Naive thymus-derived CD4-positive, alpha-beta T cell (primary cell): ENCODE measurements at regions of chr20 and their contacts with region 1.

Region 1: GRCh38 chr20:36754656-36755222 is 8.8 kb upstream of the NDRG3 start:
- DNase-seq: peak in 7 of 9 donors; percentile 12 to 56 (median 45)
- ATAC-seq: peak; percentile 88
- H3K4me3 ChIP-seq: no peak overlapping the region
- H3K4me3 Mint-ChIP-seq: no peak overlapping the region
- H3K27ac ChIP-seq: no peak overlapping the region
- H3K27ac Mint-ChIP-seq: peak overlapping the region in 1 of 9 donors; percentile 51
- H3K4me1 ChIP-seq: no peaks in the 10 kb centered on the region
- H3K4me1 Mint-ChIP-seq: peaks cover 0 to 11% (median 0%) of the 10 kb centered on the region in 7 donors
- H3K27me3 ChIP-seq: no peaks in the 10 kb centered on the region
- H3K27me3 Mint-ChIP-seq: no peaks in the 10 kb centered on the region

Region 2: DNA sequence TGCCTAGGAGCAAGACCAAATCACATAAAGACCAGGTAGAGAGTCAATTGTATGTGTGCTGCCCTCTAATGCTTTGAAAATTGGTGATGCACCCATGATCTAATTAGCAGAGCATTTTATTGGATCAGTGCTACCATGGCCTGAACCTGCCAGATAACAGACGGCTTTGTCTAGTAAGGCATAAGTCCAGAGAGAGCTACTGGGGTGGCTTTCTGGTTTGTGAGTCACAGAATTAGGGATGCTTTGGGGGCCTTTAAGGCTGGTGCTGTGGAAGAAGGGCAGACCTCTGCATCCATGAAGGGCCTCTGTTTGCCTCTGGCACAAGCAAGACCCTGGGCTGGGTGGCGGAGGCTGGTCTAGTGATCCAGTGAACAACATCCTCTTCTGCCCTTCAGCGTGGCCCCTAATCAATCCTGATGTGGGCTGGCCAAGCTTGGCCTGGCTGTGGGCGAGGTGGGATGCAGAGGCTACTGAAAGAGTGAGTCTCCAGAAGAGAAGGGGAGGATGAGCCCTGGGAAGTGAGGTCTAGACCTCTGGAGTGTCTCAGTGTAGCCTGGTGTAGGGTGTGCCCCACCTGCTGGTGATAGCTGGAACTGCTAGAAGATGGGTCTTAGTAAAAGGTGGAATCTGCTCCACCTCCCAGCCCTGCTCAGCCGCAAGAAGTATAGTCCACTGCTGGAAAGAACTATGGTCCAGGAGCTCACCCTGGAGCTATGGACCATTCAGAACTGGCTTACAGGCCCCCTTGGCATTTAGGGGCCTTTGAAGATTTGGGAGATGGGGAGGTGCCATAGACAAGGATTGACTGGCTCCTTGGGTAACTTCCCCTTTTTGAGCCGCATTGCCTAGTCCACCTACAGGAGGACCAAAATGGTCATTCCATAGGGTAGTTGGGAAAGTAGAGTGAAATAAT is 555.1 kb before region 1 on chr20:
- CTCF ChIA-PET with region 1: interaction called, 4 read pairs
- POLR2A ChIA-PET with region 1: no interaction called
- intact Hi-C with region 1: loop called in 1 of 2 experiments (anchors 1 kb)
- DNase-seq: peak; percentile 31 to 74 (median 57)
- ATAC-seq: peak; percentile 83
- H3K4me3 ChIP-seq: no peak overlapping the region
- H3K4me3 Mint-ChIP-seq: no peak overlapping the region
- H3K27ac ChIP-seq: no peak overlapping the region
- H3K27ac Mint-ChIP-seq: no peak overlapping the region
- H3K4me1 ChIP-seq: peaks cover 0 to 5% of the 10 kb centered on the region in 2 donors
- H3K4me1 Mint-ChIP-seq: peaks cover 3 to 6% (median 5%) of the 10 kb centered on the region in 7 donors
- H3K27me3 ChIP-seq: no peaks in the 10 kb centered on the region
- H3K27me3 Mint-ChIP-seq: peaks cover 9 to 21% (median 12%) of the 10 kb centered on the region in 5 donors

Region 3: GRCh38 chr20:36408219-36408618 is 346.5 kb before region 1 on chr20:
- CTCF ChIA-PET with region 1: no interaction called
- POLR2A ChIA-PET with region 1: no interaction called
- intact Hi-C with region 1: no loop called
- DNase-seq: no peak
- ATAC-seq: no peak
- H3K4me3 ChIP-seq: no peak overlapping the region
- H3K4me3 Mint-ChIP-seq: no peak overlapping the region
- H3K27ac ChIP-seq: no peak overlapping the region
- H3K27ac Mint-ChIP-seq: no peak overlapping the region
- H3K4me1 ChIP-seq: no peaks in the 10 kb centered on the region
- H3K4me1 Mint-ChIP-seq: peaks cover 0 to 9% (median 0%) of the 10 kb centered on the region in 7 donors
- H3K27me3 ChIP-seq: no peaks in the 10 kb centered on the region
- H3K27me3 Mint-ChIP-seq: peaks cover 4 to 17% (median 11%) of the 10 kb centered on the region in 5 donors

Region 4: DNA sequence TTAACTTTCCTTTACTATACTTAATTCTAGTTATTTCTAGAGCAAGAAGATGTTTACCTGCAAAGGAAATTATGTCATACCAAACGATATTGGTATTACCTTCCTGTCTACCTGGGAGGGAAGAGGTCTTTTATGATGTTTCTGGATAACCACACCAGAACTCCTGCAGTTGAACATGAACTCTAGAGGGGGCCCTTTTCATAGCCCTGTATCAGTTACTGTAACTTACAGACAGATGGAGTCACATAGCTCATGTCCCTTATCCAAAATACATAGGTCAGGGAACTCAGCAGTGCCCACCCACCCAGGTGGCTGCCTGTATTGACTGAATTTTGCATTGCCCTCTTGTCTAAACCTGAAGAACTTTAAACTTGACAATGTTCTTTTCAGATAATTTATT is 248.5 kb before region 1 on chr20:
- CTCF ChIA-PET with region 1: no interaction called
- POLR2A ChIA-PET with region 1: no interaction called
- intact Hi-C with region 1: loop called (anchors 1 kb)
- DNase-seq: peak in 7 of 9 donors; percentile 18 to 49 (median 42)
- ATAC-seq: peak; percentile 77
- H3K4me3 ChIP-seq: no peak overlapping the region
- H3K4me3 Mint-ChIP-seq: no peak overlapping the region
- H3K27ac ChIP-seq: no peak overlapping the region
- H3K27ac Mint-ChIP-seq: peak overlapping the region in 5 of 9 donors; percentile 17 to 72 (median 27)
- H3K4me1 ChIP-seq: no peaks in the 10 kb centered on the region
- H3K4me1 Mint-ChIP-seq: peaks cover 0 to 19% (median 14%) of the 10 kb centered on the region in 7 donors
- H3K27me3 ChIP-seq: no peaks in the 10 kb centered on the region
- H3K27me3 Mint-ChIP-seq: no peaks in the 10 kb centered on the region

Region 5: DNA sequence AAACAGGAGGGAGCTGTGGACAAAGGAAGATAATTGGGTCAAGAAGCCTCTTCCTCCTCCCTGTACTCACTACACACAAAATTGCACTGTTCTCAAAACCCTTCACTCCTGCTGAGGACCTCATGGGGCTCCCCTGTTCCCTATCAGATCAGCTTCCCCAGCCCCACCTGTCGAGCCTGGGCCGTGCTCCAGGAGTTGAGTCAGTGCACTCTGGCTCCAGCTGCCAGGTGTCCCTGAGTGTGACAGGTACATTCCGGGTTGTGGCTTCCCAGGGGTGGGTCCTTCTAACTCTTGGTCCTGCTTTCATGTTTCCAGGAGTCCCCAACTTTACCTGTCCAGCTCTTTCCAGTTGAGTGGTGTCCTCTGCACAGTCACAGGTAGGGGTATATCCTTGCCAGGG is 140.8 kb before region 1 on chr20:
- CTCF ChIA-PET with region 1: interaction called, 15 read pairs
- POLR2A ChIA-PET with region 1: no interaction called
- intact Hi-C with region 1: loop called (anchors 1 kb)
- DNase-seq: no peak
- ATAC-seq: no peak
- H3K4me3 ChIP-seq: no peak overlapping the region
- H3K4me3 Mint-ChIP-seq: no peak overlapping the region
- H3K27ac ChIP-seq: peak overlapping the region; percentile 21
- H3K27ac Mint-ChIP-seq: peak overlapping the region in 5 of 9 donors; percentile 14 to 85 (median 33)
- H3K4me1 ChIP-seq: no peaks in the 10 kb centered on the region
- H3K4me1 Mint-ChIP-seq: peaks cover 5 to 28% (median 18%) of the 10 kb centered on the region in 7 donors
- H3K27me3 ChIP-seq: no peaks in the 10 kb centered on the region
- H3K27me3 Mint-ChIP-seq: no peaks in the 10 kb centered on the region

Region 6: GRCh38 chr20:36672991-36673390 is 81.7 kb before region 1 on chr20:
- CTCF ChIA-PET with region 1: no interaction called
- POLR2A ChIA-PET with region 1: no interaction called
- intact Hi-C with region 1: no loop called
- DNase-seq: no peak
- ATAC-seq: no peak
- H3K4me3 ChIP-seq: no peak overlapping the region
- H3K4me3 Mint-ChIP-seq: no peak overlapping the region
- H3K27ac ChIP-seq: no peak overlapping the region
- H3K27ac Mint-ChIP-seq: no peak overlapping the region
- H3K4me1 ChIP-seq: no peaks in the 10 kb centered on the region
- H3K4me1 Mint-ChIP-seq: no peaks in the 10 kb centered on the region
- H3K27me3 ChIP-seq: no peaks in the 10 kb centered on the region
- H3K27me3 Mint-ChIP-seq: no peaks in the 10 kb centered on the region

Region 7: GRCh38 chr20:36717657-36718056 is 37.1 kb before region 1 on chr20:
- CTCF ChIA-PET with region 1: interaction called, 3 read pairs
- POLR2A ChIA-PET with region 1: no interaction called
- intact Hi-C with region 1: loop called in 1 of 2 experiments (anchors 1 kb)
- DNase-seq: peak in 4 of 9 donors; percentile 3 to 15 (median 8)
- ATAC-seq: no peak
- H3K4me3 ChIP-seq: no peak overlapping the region
- H3K4me3 Mint-ChIP-seq: no peak overlapping the region
- H3K27ac ChIP-seq: no peak overlapping the region
- H3K27ac Mint-ChIP-seq: peak overlapping the region in 2 of 9 donors; percentile 2 to 32
- H3K4me1 ChIP-seq: no peaks in the 10 kb centered on the region
- H3K4me1 Mint-ChIP-seq: peaks cover 0 to 12% (median 4%) of the 10 kb centered on the region in 7 donors
- H3K27me3 ChIP-seq: no peaks in the 10 kb centered on the region
- H3K27me3 Mint-ChIP-seq: no peaks in the 10 kb centered on the region

Region 8: DNA sequence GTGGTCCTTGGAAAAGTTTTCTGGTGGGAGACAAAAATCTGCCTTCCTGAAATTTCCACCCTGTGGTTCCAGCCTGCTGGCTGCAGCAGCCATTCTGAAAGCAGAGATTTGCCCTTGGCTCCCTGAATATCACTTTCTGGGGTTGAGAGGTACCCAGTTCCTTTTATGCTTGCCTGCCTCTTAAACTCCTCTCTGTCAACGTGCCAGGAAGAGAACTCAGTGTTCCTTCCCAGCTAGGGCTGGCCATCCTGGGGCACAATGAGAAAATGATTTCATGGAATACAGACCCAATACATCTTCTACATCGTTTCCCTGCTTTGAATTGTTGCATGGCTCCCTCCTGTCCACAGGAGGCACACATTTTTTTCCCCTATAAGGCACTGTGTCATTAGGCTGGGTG is 20.5 kb after region 1 on chr20:
- CTCF ChIA-PET with region 1: no interaction called
- POLR2A ChIA-PET with region 1: no interaction called
- intact Hi-C with region 1: no loop called
- DNase-seq: no peak
- ATAC-seq: no peak
- H3K4me3 ChIP-seq: no peak overlapping the region
- H3K4me3 Mint-ChIP-seq: peak overlapping the region; percentile 45 to 98 (median 92)
- H3K27ac ChIP-seq: no peak overlapping the region
- H3K27ac Mint-ChIP-seq: peak overlapping the region in 6 of 9 donors; percentile 42 to 97 (median 63)
- H3K4me1 ChIP-seq: peaks cover 8 to 13% of the 10 kb centered on the region in 2 donors
- H3K4me1 Mint-ChIP-seq: peaks cover 8 to 34% (median 24%) of the 10 kb centered on the region in 7 donors
- H3K27me3 ChIP-seq: no peaks in the 10 kb centered on the region
- H3K27me3 Mint-ChIP-seq: peaks cover 0 to 2% (median 0%) of the 10 kb centered on the region in 5 donors